Posterior cingulate gyrus (tissue), 11 donors: ENCODE measurements at regions of chr18 and their contacts with region 1.

Region 1: GRCh38 chr18:77207540-77207939 is 42.1 kb upstream of the GALR1 start:
- DNase-seq: peak in 2 of 10 donors; percentile 27 to 64

Region 2: GRCh38 chr18:76803814-76804213 is 403.7 kb before region 1 on chr18:
- intact Hi-C with region 1: loop called (anchors 10 kb)
- DNase-seq: peak in 6 of 10 donors; percentile 39 to 88 (median 67)

Region 3: DNA sequence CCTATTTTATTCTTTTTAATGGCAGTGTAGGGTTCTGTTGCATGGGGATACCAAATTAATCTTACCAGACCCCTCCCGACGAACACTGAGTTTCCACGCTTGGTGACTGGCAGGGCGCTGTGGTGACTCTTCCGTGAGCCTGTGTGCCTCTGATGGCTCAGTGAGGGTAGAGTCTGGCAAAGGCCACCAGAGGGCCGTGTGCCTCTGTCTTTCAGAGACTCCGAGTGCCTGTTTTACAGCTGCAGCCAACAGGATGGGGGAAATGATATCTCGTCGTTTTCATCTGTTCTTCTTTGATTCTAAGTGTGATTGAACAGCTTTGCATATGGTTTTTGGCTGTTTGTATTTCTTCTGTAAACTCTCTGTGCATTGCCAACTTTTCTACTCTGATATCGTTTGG is 285.4 kb before region 1 on chr18:
- intact Hi-C with region 1: loop called (anchors 2 kb)
- DNase-seq: peak in 9 of 10 donors; percentile 39 to 96 (median 71)

Region 4: DNA sequence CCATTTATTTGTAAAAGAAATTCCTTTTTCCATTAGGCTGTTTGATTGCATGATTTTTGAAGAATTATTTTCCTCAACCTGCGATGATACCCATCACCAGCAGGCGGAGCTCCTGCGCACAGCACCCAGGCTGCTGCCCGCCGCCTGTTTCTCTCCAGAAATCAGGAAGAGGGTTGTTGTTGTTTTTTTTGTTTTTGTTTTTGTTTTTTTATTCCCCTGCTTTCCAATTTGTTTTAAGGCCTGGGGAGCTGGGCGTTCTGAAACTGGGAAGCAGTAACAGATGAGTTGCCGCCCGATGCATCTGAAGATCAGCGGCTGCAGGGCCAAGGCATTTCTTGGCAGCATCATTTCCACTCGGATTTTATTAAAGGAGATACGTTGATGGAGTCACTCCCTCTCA is 207.0 kb before region 1 on chr18:
- intact Hi-C with region 1: loop called (anchors 2 kb)
- DNase-seq: peak in 6 of 10 donors; percentile 61 to 95 (median 76)

Region 5: GRCh38 chr18:77067291-77068061 is 140.1 kb before region 1 on chr18:
- intact Hi-C with region 1: loop called (anchors 2 kb)
- DNase-seq: peak in 4 of 10 donors; percentile 62 to 94 (median 82)

Region 6: DNA sequence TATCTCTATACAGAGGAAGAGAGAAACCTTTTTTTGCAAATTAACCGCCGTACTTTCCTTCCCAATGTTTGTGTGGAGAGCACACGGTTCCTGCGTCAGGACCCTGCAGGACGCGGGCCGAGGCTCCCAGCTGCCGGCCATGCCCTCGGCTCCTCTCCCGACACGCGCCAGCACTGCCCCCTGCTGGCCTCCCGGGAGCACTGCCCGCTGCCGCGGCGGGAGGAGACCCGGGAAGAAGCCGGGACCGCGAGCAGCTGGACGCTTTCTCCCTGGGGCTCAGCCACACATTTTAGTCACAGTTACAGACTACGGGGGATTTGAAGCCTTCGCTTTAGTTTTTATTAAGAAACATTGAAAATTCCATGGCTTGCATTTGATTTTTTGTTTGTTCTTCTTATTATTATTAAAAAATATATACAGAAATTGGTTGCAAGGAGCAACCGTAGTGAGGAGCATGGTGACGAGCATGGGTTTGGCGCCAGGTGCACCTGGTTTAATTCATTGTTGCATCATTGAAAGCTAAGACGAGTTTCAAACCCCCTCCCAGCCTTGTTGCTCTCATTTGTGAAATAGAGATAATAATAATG is 443.4 kb after region 1 on chr18:
- intact Hi-C with region 1: loop called (anchors 5 kb)
- DNase-seq: peak; percentile 45 to 97 (median 82)